Aorta (tissue), 5 donors: ENCODE measurements at regions of chr10 and their contacts with region 1.

Region 1: GRCh38 chr10:89701238-89702120 is at the start of gene KIF20B:
- DNase-seq: peak; percentile 97 to 98
- ATAC-seq: peak; percentile 100
- H3K4me3 ChIP-seq: peak within 1 kb of the TSS; percentile 60 to 86
- H3K27ac ChIP-seq: peak within 1 kb of the TSS in 1 of 2 donors; percentile 66
- H3K4me1 ChIP-seq: no peaks in the 10 kb centered on the region
- H3K27me3 ChIP-seq: no peaks in the 10 kb centered on the region
- total RNA-seq, gene KIF20B: 5.2 to 6.2 TPM

Region 2: DNA sequence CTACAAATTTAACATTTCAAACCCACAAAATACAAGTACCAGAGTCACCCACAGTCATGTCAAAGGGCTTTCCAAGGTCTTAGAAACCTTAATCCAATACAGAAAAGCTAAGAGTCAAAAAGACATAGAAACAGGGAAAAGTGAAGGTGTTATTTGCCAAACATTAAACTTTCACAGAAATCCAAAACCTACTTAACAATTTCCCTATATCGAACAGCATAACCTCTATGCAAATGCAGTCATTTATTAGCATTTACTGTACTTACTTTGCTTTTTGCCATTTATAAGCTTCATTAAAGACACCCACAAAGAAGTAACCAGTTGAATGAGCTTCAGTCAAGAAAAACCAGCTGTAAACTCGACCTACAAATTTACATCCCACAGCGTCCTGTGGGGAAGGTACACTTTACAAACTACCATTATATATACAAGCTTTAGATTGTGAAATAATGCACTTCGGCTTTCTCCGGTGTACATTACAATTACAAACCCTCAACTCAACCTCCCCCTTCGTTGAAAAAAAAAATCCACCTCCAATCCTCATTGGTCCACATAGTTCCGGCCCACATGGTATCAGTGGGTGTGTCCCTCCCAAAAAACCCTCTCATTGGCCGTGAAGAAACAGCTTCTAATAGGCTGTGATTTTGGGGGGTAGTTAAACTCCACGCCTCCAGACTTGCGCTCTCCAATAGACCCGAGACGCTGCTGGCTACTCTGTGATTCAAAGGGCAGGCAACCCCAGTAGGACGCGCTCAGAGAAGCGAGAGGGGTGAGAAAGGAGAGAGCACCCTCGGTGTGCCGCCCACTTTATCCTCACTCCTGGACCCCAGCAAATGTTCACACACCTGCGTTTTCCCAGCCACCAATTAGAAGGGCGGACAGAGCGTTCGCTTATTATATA is 57.8 kb before region 1 on chr10:
- intact Hi-C with region 1: loop called (anchors 5 kb)
- DNase-seq: peak; percentile 71 to 79
- ATAC-seq: peak; percentile 92
- H3K4me3 ChIP-seq: peak overlapping the region; percentile 62 to 81
- H3K27ac ChIP-seq: peak overlapping the region; percentile 9 to 62
- H3K4me1 ChIP-seq: no peaks in the 10 kb centered on the region
- H3K27me3 ChIP-seq: no peaks in the 10 kb centered on the region

Region 3: GRCh38 chr10:89845541-89846277 is 144.2 kb after region 1 on chr10:
- intact Hi-C with region 1: no loop called
- DNase-seq: no peak
- ATAC-seq: no peak
- H3K4me3 ChIP-seq: no peak overlapping the region
- H3K27ac ChIP-seq: no peak overlapping the region
- H3K4me1 ChIP-seq: peaks cover 0 to 1% of the 10 kb centered on the region in 2 donors
- H3K27me3 ChIP-seq: no peaks in the 10 kb centered on the region

Region 4: GRCh38 chr10:90378524-90379076 is 677.1 kb after region 1 on chr10:
- intact Hi-C with region 1: no loop called
- DNase-seq: no peak
- ATAC-seq: no peak
- H3K4me3 ChIP-seq: no peak overlapping the region
- H3K27ac ChIP-seq: no peak overlapping the region
- H3K4me1 ChIP-seq: no peaks in the 10 kb centered on the region
- H3K27me3 ChIP-seq: no peaks in the 10 kb centered on the region